H1 (cell line): ENCODE measurements at regions of chr4 and their contacts with region 1.

Region 1: DNA sequence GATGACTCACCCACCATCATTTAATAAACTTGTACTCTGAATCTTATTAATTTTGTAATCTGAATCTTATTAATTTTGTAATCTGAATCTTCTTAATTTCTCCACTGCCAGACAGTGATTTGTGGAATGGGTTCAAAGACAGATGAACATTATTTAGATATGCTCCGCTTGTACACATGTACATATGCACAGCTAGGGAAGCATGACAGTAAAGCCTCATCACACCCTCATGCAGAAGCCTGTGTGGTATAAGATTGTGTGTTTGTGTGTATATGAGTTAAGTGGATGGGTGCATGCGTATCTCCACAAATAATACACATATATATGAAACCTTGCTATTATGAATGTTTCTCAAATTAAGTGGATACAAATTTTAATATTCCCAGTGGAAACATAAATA is 318.5 kb upstream of the SFRP2 start:
- DNase-seq: no peak
- H3K4me3 ChIP-seq: no peak overlapping the region
- H3K27ac ChIP-seq: no peak overlapping the region
- H3K4me1 ChIP-seq: no peaks in the 10 kb centered on the region
- H3K27me3 ChIP-seq: no peaks in the 10 kb centered on the region
- CTCF ChIP-seq: no peak
- EP300 ChIP-seq: no peak
- POLR2A ChIP-seq: no peak
- RAD21 ChIP-seq: no peak

Region 2: DNA sequence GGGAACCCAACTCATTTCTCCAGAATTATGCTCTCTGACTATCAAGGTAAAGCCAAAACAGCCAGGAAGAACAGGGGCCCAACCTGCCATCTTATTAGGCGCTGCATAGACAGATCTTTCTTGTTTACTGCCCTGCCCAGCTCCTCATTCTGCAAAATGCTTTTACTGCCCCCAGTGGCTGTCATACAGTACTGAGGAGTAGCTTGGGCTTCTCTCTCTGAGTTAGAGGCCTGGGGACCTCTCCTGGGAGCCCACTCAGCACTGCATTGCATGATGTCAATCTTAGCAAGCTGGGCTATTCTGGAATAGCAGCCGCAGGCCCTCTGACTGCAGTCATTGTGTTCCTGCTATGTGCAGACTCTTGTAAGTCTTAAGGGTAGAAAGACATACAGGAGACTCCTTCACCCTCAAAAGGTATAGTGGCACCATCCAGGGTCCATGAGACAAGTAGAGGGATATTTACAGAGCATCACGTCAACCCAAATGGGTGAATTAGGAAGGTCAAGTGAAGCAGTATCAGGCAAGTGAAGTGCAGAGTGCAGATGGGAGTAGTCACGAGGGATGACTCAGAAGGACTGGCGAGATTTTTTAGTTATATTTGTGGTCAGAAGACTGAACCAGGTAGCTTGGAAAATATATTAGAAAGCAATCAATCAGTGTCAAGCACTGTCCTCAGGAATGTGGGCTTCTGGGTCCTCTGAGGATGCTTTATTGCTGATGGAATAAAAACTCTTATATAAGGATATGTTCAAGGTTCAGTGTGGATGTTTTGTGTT is 24.4 kb before region 1 on chr4:
- CTCF ChIA-PET with region 1: interaction called, 12 read pairs
- POLR2A ChIA-PET with region 1: no interaction called
- DNase-seq: peak; percentile 23 to 57
- H3K4me3 ChIP-seq: no peak overlapping the region
- H3K27ac ChIP-seq: no peak overlapping the region
- H3K4me1 ChIP-seq: no peaks in the 10 kb centered on the region
- H3K27me3 ChIP-seq: no peaks in the 10 kb centered on the region; a peak in 2 of 7 replicates
- CTCF ChIP-seq: peak; percentile 40 to 93 (median 85)
- EP300 ChIP-seq: no peak
- POLR2A ChIP-seq: no peak
- RAD21 ChIP-seq: peak; percentile 72 to 84

Region 3: DNA sequence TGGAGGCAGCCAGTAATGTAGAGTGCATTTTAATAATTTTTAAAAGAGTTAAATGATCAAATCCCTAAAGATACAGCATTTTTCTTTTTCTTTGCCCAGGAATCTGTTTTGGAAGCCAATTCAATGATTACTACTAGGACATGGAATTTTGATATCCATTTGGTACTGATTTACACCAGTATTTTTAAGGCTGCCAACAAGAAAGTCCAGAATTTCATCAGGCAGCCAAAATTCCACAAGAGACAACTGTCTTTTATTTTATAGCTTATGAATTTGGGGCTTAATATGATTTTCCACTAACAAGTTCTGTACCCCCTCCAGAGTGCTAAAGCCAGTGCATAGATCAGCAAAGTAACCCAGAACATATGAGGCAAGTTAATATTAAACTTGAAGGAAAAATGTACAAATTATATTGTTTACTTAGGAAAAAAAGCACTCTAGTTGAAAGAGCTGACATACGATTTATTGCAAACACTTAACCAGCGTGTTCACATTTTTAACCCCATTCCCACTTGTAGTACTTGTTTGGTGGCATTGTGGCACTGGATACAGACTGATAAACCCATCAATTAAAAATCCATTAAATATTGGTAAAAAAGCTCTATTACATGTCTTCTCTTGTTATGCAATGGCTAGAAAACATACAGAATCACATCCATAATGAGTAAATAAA is 124.6 kb after region 1 on chr4:
- CTCF ChIA-PET with region 1: no interaction called
- POLR2A ChIA-PET with region 1: no interaction called
- DNase-seq: no peak
- H3K4me3 ChIP-seq: no peak overlapping the region
- H3K27ac ChIP-seq: no peak overlapping the region
- H3K4me1 ChIP-seq: peaks cover 0 to 6% (median 0%) of the 10 kb centered on the region in 4 experiments; a peak in 1 of 7 replicates
- H3K27me3 ChIP-seq: no peaks in the 10 kb centered on the region
- CTCF ChIP-seq: no peak
- EP300 ChIP-seq: no peak
- POLR2A ChIP-seq: no peak
- RAD21 ChIP-seq: no peak

Region 4: DNA sequence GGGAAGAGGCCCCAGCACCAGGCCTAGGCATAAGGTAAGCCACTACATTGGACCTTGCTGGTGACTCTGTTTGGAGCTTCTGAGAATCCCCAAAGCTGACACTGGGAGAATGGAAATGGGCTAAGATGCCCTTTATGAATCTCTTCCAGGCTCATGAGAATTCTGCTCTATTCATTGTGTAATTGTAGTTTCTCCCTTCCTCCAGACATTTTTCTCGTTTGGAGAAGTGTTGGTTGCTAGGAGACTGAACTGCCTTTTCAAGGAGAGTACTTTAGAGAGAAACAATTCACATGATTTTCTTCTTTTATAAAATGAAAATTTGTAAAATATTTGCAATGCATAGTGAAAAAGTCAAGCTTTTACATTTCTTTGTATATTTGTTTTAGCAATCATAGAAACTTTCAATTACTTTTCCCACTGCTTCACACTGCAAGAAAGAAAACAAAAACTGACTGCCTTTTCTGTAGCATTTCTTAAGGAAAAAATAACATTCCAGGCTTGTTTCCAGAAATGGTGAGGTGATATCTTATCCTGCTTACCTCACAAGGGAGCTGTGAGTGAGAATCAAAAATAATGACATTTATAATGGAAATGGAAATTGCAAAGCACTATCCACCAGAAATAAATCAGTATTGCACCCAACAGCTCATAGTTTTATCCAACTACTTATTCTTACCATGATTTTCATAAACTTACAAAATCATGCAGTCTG is 409.1 kb after region 1 on chr4:
- CTCF ChIA-PET with region 1: no interaction called
- POLR2A ChIA-PET with region 1: no interaction called
- DNase-seq: no peak
- H3K4me3 ChIP-seq: no peak overlapping the region
- H3K27ac ChIP-seq: no peak overlapping the region
- H3K4me1 ChIP-seq: peaks cover 0 to 7% (median 2%) of the 10 kb centered on the region in 4 experiments; a peak in 2 of 7 replicates
- H3K27me3 ChIP-seq: no peaks in the 10 kb centered on the region
- CTCF ChIP-seq: no peak
- EP300 ChIP-seq: no peak
- POLR2A ChIP-seq: no peak
- RAD21 ChIP-seq: no peak